ENCODE measurements at regions of chr2 and their contacts with region 1.

Region 1: GRCh38 chr2:113248997-113249770 is 29.5 kb downstream of the PAX8 start:
- DNase-seq: peak; percentile 95
- H3K4me3 ChIP-seq: no peak overlapping the region
- H3K27ac ChIP-seq: no peak overlapping the region
- H3K4me1 ChIP-seq: peaks cover 6 to 11% (median 9%) of the 10 kb centered on the region in 4 donors
- H3K27me3 ChIP-seq: no peaks in the 10 kb centered on the region
- CTCF ChIP-seq: peak; percentile 87 to 92 (median 89)
- EP300 ChIP-seq: no peak
- POLR2A ChIP-seq: no peak

Region 2: GRCh38 chr2:113203901-113204519 is 45.2 kb before region 1 on chr2:
- intact Hi-C with region 1: loop called (anchors 5 kb)
- DNase-seq: no peak
- H3K4me3 ChIP-seq: no peak overlapping the region
- H3K27ac ChIP-seq: no peak overlapping the region
- H3K4me1 ChIP-seq: peaks cover 7 to 24% (median 14%) of the 10 kb centered on the region in 4 donors
- H3K27me3 ChIP-seq: no peaks in the 10 kb centered on the region
- CTCF ChIP-seq: peak; percentile 74 to 90 (median 88)
- EP300 ChIP-seq: no peak
- POLR2A ChIP-seq: no peak

Measured in esophagus muscularis mucosa (tissue), 4 donors.